Right ventricle myocardium superior (tissue), 1 donor: ENCODE measurements at regions of chr4 and their contacts with region 1.

Region 1: GRCh38 chr4:113106108-113106507 is 56.7 kb downstream of the ANK2 start:
- DNase-seq: no peak
- ATAC-seq: peak; percentile 75

Region 2: GRCh38 chr4:113248320-113248719 is 142.2 kb after region 1 on chr4:
- intact Hi-C with region 1: loop called (anchors 10 kb)
- DNase-seq: no peak
- ATAC-seq: no peak

Region 3: DNA sequence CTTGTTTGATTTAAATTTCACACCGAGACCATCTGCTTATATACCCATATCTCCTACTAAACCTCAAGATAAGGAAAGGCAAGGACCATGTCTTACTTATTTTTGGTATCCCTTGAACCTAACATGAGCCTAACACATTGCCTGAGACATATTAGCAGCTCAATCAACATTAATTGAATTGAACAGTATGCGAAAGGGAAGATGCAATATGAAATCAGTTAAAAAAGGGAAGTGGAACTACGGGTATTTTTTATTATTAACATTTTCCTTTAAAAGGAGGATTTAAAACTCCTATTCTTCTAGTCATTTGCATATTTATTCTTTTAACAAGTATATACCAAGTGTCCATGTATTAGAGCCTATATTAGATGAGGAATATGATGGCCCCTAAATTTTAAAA is 458.4 kb after region 1 on chr4:
- intact Hi-C with region 1: no loop called
- DNase-seq: no peak
- ATAC-seq: no peak